Breast epithelium (tissue), 4 donors: ENCODE measurements at regions of chr19 and their contacts with region 1.

Region 1: GRCh38 chr19:44032001-44032610 is 6.9 kb downstream of the ZNF222 start:
- DNase-seq: no peak
- H3K4me3 ChIP-seq: no peak overlapping the region
- H3K27ac ChIP-seq: no peak overlapping the region
- H3K4me1 ChIP-seq: no peaks in the 10 kb centered on the region
- H3K27me3 ChIP-seq: no peaks in the 10 kb centered on the region
- CTCF ChIP-seq: no peak
- POLR2A ChIP-seq: no peak

Region 2: GRCh38 chr19:43784981-43785808 is 246.9 kb before region 1 on chr19:
- intact Hi-C with region 1: no loop called
- DNase-seq: peak in 1 of 2 donors; percentile 65
- H3K4me3 ChIP-seq: peak overlapping the region in 1 of 3 donors; percentile 39
- H3K27ac ChIP-seq: peak overlapping the region; percentile 85 to 90
- H3K4me1 ChIP-seq: peaks cover 5 to 13% of the 10 kb centered on the region in 2 donors
- H3K27me3 ChIP-seq: no peaks in the 10 kb centered on the region
- CTCF ChIP-seq: peak; percentile 90 to 98 (median 94)
- POLR2A ChIP-seq: no peak

Region 3: GRCh38 chr19:43997631-43998290 is 34.3 kb before region 1 on chr19:
- intact Hi-C with region 1: loop called (anchors 2 kb)
- DNase-seq: no peak
- H3K4me3 ChIP-seq: no peak overlapping the region
- H3K27ac ChIP-seq: no peak overlapping the region
- H3K4me1 ChIP-seq: no peaks in the 10 kb centered on the region
- H3K27me3 ChIP-seq: no peaks in the 10 kb centered on the region
- CTCF ChIP-seq: no peak
- POLR2A ChIP-seq: no peak

Region 4: DNA sequence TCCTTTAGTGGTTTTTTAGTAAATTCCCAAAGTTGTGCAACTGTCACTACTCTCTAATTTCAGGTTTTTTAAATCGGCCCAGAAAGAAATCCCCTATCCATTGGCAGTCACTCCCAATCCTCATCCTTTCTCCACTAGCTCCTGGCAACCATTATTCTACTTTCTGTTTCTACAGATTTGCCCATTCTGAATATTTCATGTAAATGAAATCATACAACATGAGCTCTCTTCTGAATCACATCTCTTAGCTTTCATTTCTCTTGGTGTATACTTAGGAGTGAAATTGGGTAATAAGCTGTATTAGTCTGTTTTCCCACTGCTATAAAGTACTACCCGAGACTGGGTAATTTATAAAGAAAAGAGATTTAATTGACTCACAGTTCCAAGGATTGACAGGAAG is 10.0 kb after region 1 on chr19:
- intact Hi-C with region 1: no loop called
- DNase-seq: no peak
- H3K4me3 ChIP-seq: no peak overlapping the region
- H3K27ac ChIP-seq: no peak overlapping the region
- H3K4me1 ChIP-seq: no peaks in the 10 kb centered on the region
- H3K27me3 ChIP-seq: no peaks in the 10 kb centered on the region
- CTCF ChIP-seq: no peak
- POLR2A ChIP-seq: no peak